ENCODE measurements at regions of chr2 and their contacts with region 1.

Region 1: DNA sequence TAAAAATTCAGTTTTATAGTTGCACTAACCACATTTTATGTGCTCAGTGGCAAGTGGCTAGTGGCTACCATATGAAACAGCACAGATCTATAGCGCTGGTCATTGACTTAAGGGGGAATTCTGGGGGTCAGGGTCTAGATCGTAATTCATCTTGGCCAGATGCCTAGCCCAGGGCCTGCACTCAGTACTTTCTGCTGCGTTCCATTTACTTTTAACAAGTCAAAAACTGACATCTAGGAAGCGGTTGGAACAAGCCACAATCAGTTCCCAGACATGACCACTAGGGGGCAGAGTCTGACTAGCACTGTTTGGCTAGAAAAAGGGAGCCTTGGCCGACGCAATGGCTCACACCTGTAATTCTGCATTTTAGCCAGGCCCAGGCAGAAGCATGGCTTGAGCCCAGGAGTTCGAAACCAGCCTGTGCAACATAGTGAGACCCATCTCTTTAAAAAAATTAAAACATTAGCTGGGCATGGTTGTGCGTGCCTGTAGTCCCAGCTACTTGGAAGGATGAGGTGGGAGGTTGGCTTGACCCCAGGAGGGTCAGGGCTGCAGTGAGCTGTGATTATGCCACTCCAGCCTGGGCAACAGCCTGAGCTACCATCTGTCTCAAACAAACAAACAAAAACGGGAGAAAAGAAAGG is 9.0 kb upstream of the TMBIM1 start:
- DNase-seq: peak; percentile 86 to 97 (median 90)
- H3K4me3 ChIP-seq: no peak overlapping the region
- H3K27ac ChIP-seq: no peak overlapping the region
- H3K4me1 ChIP-seq: no peaks in the 10 kb centered on the region
- H3K27me3 ChIP-seq: no peaks in the 10 kb centered on the region
- CTCF ChIP-seq: peak; percentile 96 to 99 (median 98)
- POLR2A ChIP-seq: no peak

Region 2: GRCh38 chr2:218357236-218358159 is 56.2 kb after region 1 on chr2:
- intact Hi-C with region 1: loop called (anchors 5 to 10 kb)
- DNase-seq: peak in 2 of 7 donors; percentile 55 to 69
- H3K4me3 ChIP-seq: no peak overlapping the region
- H3K27ac ChIP-seq: no peak overlapping the region
- H3K4me1 ChIP-seq: peaks cover 0 to 6% of the 10 kb centered on the region in 2 donors
- H3K27me3 ChIP-seq: no peaks in the 10 kb centered on the region
- CTCF ChIP-seq: no peak
- POLR2A ChIP-seq: no peak

Region 3: GRCh38 chr2:218466016-218466521 is 164.8 kb after region 1 on chr2:
- intact Hi-C with region 1: loop called (anchors 10 kb)
- DNase-seq: no peak
- H3K4me3 ChIP-seq: no peak overlapping the region
- H3K27ac ChIP-seq: no peak overlapping the region
- H3K4me1 ChIP-seq: peaks cover 7% of the 10 kb centered on the region in 2 donors
- H3K27me3 ChIP-seq: no peaks in the 10 kb centered on the region
- CTCF ChIP-seq: peak; percentile 23 to 65 (median 47)
- POLR2A ChIP-seq: no peak

Region 4: DNA sequence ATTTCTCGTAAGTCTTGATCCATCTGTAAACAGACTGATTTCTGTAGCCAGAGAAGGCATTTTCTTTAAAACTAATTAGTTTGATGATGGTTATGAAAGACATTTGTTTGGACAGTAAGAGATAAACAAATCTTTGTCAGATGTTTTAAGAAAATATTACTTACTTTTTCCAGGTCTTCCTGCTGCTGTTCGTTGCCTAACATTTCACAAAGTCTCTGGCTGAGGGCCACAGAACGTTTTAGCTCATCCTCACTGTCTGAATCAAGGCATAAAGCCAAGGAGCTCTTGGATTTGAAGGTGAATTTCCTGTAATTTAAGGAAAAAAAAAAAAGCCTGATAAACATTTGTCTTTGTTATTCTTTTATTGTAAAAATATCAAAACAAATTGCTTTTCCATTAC is 175.4 kb after region 1 on chr2:
- intact Hi-C with region 1: no loop called
- DNase-seq: peak; percentile 59 to 87 (median 82)
- H3K4me3 ChIP-seq: peak overlapping the region in 1 of 4 donors; percentile 36
- H3K27ac ChIP-seq: peak overlapping the region in 4 of 5 donors; percentile 34 to 78 (median 69)
- H3K4me1 ChIP-seq: peaks cover 0 to 17% of the 10 kb centered on the region in 2 donors
- H3K27me3 ChIP-seq: no peaks in the 10 kb centered on the region
- CTCF ChIP-seq: no peak
- POLR2A ChIP-seq: no peak